ENCODE measurements at regions of chr5 and their contacts with region 1.

Region 1: DNA sequence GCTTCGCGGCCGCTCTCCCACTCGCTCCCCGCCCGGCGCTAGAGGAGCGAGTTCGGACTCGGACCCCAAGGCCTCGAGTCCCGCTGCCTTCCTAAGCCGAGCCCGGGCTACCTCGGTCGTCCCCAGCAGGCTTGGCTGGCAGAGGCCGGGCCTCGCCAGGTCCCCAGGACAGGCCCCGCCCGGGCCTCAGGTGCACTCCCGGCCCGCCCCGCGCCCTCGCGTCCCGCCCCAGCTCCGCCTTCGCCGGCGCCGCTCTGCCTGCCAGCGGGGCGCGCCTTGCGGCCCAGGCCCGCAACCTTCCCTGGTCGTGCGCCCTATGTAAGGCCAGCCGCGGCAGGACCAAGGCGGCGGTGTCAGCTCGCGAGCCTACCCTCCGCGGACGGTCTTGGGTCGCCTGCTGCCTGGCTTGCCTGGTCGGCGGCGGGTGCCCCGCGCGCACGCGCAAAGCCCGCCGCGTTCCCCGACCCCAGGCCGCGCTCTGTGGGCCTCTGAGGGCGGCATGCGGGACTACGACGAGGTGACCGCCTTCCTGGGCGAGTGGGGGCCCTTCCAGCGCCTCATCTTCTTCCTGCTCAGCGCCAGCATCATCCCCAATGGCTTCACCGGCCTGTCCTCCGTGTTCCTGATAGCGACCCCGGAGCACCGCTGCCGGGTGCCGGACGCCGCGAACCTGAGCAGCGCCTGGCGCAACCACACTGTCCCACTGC is at the start of gene SLC22A5:
- DNase-seq: peak; percentile 88
- ATAC-seq: peak; percentile 93
- H3K4me3 ChIP-seq: peak within 1 kb of the TSS in 4 of 5 experiments; percentile 52 to 77 (median 68)
- H3K4me3 Mint-ChIP-seq: peak within 1 kb of the TSS; percentile 87
- H3K27ac ChIP-seq: peak within 1 kb of the TSS; percentile 73 to 82
- H3K27ac Mint-ChIP-seq: peak within 1 kb of the TSS; percentile 81
- H3K4me1 ChIP-seq: peaks cover 10 to 15% of the 10 kb centered on the region in 2 donors
- H3K4me1 Mint-ChIP-seq: peaks cover 19% of the 10 kb centered on the region
- H3K27me3 ChIP-seq: no peaks in the 10 kb centered on the region
- H3K27me3 Mint-ChIP-seq: no peaks in the 10 kb centered on the region
- CTCF ChIP-seq: no peak
- total RNA-seq, gene SLC22A5: 12.9 and 13.2 TPM in 2 replicates

Region 2: GRCh38 chr5:132358775-132359174 is 10.9 kb before region 1 on chr5:
- CTCF ChIA-PET with region 1: interaction called, 6 read pairs
- POLR2A ChIA-PET with region 1: interaction called, 8 read pairs
- intact Hi-C with region 1: loop called (anchors 1 kb)
- DNase-seq: no peak
- ATAC-seq: no peak
- H3K4me3 ChIP-seq: no peak overlapping the region
- H3K4me3 Mint-ChIP-seq: no peak overlapping the region
- H3K27ac ChIP-seq: peak overlapping the region; percentile 14 to 76
- H3K27ac Mint-ChIP-seq: no peak overlapping the region
- H3K4me1 ChIP-seq: peaks cover 33 to 39% of the 10 kb centered on the region in 2 donors
- H3K4me1 Mint-ChIP-seq: peaks cover 15% of the 10 kb centered on the region
- H3K27me3 ChIP-seq: no peaks in the 10 kb centered on the region
- H3K27me3 Mint-ChIP-seq: no peaks in the 10 kb centered on the region
- CTCF ChIP-seq: no peak